ENCODE measurements at regions of chr17 and their contacts with region 1.

Region 1: GRCh38 chr17:44350733-44351226 is 5.7 kb downstream of the GRN start:
- DNase-seq: peak; percentile 73 to 79 (median 76)
- ATAC-seq: peak; percentile 73 to 79 (median 76)
- H3K4me3 ChIP-seq: no peak overlapping the region
- H3K27ac ChIP-seq: no peak overlapping the region
- H3K4me1 ChIP-seq: peaks cover 0 to 6% (median 0%) of the 10 kb centered on the region in 4 donors
- H3K27me3 ChIP-seq: no peaks in the 10 kb centered on the region
- CTCF ChIP-seq: peak; percentile 65 to 79 (median 78)
- POLR2A ChIP-seq: no peak

Region 2: DNA sequence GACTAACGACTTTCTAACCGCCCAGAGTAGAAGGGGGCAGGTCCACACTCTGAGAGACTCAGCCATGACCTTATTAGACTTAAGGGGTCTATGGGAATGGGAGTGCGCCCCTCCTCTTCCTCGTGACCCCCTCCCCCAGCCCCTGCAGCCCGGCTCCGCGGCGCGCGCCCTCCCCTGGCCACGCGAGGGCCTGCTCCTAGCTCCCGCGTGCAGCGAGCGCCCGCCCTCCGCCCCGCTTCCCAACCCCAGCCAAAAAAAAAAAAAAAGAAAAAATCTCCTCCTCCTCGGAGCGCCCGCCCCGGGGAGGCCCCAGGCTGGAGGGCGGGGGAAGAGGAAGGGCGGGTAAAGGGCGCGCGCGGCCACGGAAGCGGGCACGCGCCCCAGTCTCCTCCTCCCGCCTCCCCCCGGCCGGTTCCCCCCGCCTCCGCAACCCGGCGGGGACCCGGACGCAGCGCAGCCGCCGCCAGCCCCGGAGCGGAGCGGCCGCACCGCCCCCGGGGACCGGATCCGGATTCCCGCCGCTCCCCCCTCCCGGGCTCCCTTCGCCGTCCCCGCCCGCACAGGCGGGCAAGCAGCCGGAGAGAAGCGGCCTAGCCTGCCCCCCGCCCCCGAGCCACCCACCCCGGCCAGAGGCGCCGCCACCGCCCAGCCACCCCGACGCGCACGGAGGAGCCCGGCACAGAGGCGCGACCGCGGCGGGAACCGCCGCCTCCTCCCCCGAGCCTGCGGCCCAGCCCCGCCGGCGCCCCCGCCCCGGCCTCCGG is 132.3 kb before region 1 on chr17:
- intact Hi-C with region 1: loop called in 1 of 2 experiments (anchors 10 kb)
- DNase-seq: peak; percentile 92 to 94 (median 93)
- ATAC-seq: peak; percentile 74 to 85 (median 74)
- H3K4me3 ChIP-seq: peak overlapping the region; percentile 82 to 97 (median 93)
- H3K27ac ChIP-seq: peak overlapping the region; percentile 87 to 97 (median 96)
- H3K4me1 ChIP-seq: peaks cover 0 to 26% (median 11%) of the 10 kb centered on the region in 4 donors
- H3K27me3 ChIP-seq: no peaks in the 10 kb centered on the region
- CTCF ChIP-seq: peak; percentile 34 to 74 (median 68)
- POLR2A ChIP-seq: no peak

Measured in right lobe of liver (tissue), 6 donors.